ENCODE measurements at regions of chr4 and their contacts with region 1.

Region 1: DNA sequence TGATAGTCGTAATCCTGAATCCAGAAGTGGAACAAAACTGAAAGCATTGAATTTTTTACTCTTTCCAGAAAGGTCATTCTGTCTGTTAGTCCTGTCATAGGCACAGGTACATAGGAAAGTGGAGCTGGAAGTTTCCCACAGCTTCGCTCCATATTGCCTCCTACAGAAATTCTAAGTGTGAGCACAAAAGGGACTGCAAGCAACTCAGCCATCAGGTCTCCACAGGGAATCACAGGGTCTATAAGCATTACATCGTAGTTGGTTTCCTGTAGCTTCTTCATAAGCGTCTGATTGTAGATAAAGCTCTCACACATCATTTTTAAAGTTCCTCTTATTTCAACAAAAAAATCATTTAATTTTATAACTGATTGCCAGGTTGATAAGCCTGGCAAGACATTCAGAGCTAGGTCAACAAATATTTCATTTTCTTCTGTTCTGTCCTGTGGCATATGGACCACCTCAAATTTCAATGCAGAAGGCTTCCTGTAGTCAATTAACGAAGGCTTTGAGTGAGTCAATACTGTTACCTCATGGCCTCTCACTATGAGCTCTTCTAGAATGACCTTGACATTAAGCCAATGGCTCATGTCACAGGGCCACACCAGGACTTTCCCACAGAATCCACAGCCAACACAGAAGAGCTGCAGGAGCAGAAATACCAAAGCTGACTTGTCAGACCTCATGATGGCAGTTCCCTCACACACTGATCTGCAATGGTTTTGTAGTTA is at the start of gene UGT2A3:
- DNase-seq: peak; percentile 49
- H3K4me3 Mint-ChIP-seq: peak within 1 kb of the TSS; percentile 50
- H3K27ac Mint-ChIP-seq: peak within 1 kb of the TSS; percentile 73
- H3K4me1 Mint-ChIP-seq: peaks cover 41% of the 10 kb centered on the region
- H3K27me3 Mint-ChIP-seq: no peaks in the 10 kb centered on the region
- CTCF ChIP-seq: no peak
- total RNA-seq, gene UGT2A3: 2.9 and 5.2 TPM in 2 replicates

Region 2: DNA sequence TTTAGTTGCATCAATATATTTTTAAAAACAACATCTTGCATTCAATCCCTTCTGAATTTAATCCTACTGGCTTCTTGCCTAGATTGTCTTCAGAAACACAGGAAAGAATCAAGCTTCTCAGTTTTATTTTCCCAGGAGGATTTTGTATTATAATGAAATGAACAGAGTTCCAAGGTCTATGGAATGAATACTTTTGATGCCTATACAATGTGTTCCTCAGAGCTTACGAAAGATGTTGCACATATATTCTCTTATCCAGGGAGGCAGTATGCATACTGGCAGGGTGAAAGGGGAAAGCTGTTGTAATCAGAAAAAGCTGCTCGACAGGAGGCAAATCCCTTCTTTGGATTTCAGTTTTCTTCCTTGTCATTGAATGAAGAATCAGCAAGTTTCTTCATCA is 1076.3 kb before region 1 on chr4:
- CTCF ChIA-PET with region 1: no interaction called
- intact Hi-C with region 1: no loop called
- DNase-seq: no peak
- H3K4me3 Mint-ChIP-seq: no peak overlapping the region
- H3K27ac Mint-ChIP-seq: no peak overlapping the region
- H3K4me1 Mint-ChIP-seq: no peaks in the 10 kb centered on the region
- H3K27me3 Mint-ChIP-seq: no peaks in the 10 kb centered on the region
- CTCF ChIP-seq: no peak

Region 3: GRCh38 chr4:68693325-68694075 is 257.7 kb before region 1 on chr4:
- CTCF ChIA-PET with region 1: no interaction called
- intact Hi-C with region 1: no loop called
- DNase-seq: no peak
- H3K4me3 Mint-ChIP-seq: no peak overlapping the region
- H3K27ac Mint-ChIP-seq: no peak overlapping the region
- H3K4me1 Mint-ChIP-seq: no peaks in the 10 kb centered on the region
- H3K27me3 Mint-ChIP-seq: no peaks in the 10 kb centered on the region
- CTCF ChIP-seq: no peak

Region 4: GRCh38 chr4:68963374-68963773 is 12.1 kb after region 1 on chr4:
- CTCF ChIA-PET with region 1: no interaction called
- intact Hi-C with region 1: loop called (anchors 1 kb)
- DNase-seq: no peak
- H3K4me3 Mint-ChIP-seq: peak overlapping the region; percentile 44
- H3K27ac Mint-ChIP-seq: peak overlapping the region; percentile 6
- H3K4me1 Mint-ChIP-seq: peaks cover 37% of the 10 kb centered on the region
- H3K27me3 Mint-ChIP-seq: no peaks in the 10 kb centered on the region
- CTCF ChIP-seq: no peak

Region 5: DNA sequence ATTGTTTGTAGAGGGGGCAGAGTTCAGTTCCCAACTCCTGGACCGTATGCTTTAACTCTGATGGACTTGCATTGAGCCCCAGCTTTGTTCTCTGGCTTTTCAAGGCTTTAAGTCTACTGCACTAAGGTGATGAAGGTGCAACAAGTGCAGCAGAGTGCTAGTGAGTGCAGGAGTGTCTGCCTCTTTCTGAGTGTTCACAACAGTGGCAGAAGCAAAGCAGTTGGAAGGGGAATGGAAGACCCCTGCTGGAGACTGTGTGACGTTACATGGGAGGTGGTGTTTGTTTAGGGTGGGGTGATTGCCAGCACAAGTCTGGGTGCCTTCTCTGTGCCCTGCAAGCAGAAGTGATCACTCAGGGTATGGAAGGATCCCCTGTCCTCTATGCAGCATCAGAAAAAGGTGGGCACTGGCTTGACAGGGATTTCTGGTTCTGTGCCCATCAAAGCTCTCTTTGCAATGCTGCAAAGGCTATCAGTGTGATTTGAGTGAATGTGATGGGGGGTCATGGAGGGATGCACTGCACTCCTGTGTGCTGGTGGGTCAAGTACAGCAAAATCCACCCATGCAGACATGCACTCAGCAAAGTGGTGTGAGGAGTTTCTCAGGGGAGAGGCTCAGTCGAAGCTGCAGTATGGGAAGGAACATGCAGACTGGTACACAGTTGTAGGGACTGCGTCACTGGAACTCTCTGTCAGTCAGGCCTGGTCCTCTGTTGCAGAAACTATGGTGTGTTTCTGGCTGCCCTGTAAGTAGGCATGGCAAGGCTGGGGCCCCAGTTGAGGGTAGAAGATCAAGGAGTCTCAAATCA is 74.2 kb after region 1 on chr4:
- CTCF ChIA-PET with region 1: no interaction called
- intact Hi-C with region 1: loop called (anchors 10 kb)
- DNase-seq: peak; percentile 28
- H3K4me3 Mint-ChIP-seq: no peak overlapping the region
- H3K27ac Mint-ChIP-seq: no peak overlapping the region
- H3K4me1 Mint-ChIP-seq: peaks cover 15% of the 10 kb centered on the region
- H3K27me3 Mint-ChIP-seq: no peaks in the 10 kb centered on the region
- CTCF ChIP-seq: peak; percentile 50

Measured in Calu3 (cell line).